ENCODE measurements at regions of chr12 and their contacts with region 1.

Region 1: GRCh38 chr12:53267999-53268647 is at the start of gene ESPL1:
- DNase-seq: peak; percentile 89
- ATAC-seq: peak; percentile 88
- H3K4me3 Mint-ChIP-seq: peak within 1 kb of the TSS; percentile 100
- H3K27ac Mint-ChIP-seq: peak within 1 kb of the TSS; percentile 86
- H3K4me1 Mint-ChIP-seq: peaks cover 29% of the 10 kb centered on the region
- H3K27me3 Mint-ChIP-seq: no peaks in the 10 kb centered on the region; the same call in 1 of the 2 replicates
- CTCF ChIP-seq: peak; percentile 26; the same call in 1 of the 2 replicates
- total RNA-seq, gene ESPL1: 41.5 to 61.4 TPM (median 48.5 TPM) in 3 replicates

Region 2: GRCh38 chr12:53174881-53175491 is 93.1 kb before region 1 on chr12:
- CTCF ChIA-PET with region 1: interaction called, 15 read pairs
- POLR2A ChIA-PET with region 1: no interaction called
- DNase-seq: peak; percentile 63
- ATAC-seq: peak; percentile 97
- H3K4me3 Mint-ChIP-seq: no peak overlapping the region
- H3K27ac Mint-ChIP-seq: no peak overlapping the region
- H3K4me1 Mint-ChIP-seq: peaks cover 23% of the 10 kb centered on the region
- H3K27me3 Mint-ChIP-seq: peaks cover 100% of the 10 kb centered on the region
- CTCF ChIP-seq: no peak

Region 3: DNA sequence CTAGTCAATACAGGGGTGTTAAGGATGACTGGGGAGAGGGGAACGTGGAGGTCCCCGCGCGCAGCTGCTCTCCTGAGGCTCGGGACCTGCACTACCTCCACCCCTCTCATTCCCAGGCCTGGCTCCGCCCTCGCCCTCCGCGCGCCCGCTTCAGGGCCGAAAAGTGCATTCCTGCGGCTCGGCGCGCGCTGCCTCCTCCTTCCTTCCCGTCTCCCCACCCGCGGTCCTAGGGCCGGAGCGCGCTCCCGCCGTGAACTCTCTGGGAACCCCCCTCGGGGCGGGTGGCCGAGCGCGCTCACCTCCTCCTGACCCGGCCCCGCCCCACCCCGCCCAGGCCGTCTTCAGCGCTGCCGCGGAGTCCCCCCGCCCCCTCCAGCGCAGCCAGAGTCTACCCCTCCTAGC is 47.3 kb before region 1 on chr12:
- CTCF ChIA-PET with region 1: interaction called, 333 read pairs
- POLR2A ChIA-PET with region 1: interaction called, 5 read pairs
- DNase-seq: peak; percentile 94
- ATAC-seq: peak; percentile 38
- H3K4me3 Mint-ChIP-seq: peak overlapping the region; percentile 90
- H3K27ac Mint-ChIP-seq: peak overlapping the region; percentile 98
- H3K4me1 Mint-ChIP-seq: peaks cover 75% of the 10 kb centered on the region
- H3K27me3 Mint-ChIP-seq: peaks cover 7% of the 10 kb centered on the region; the same call in 1 of the 2 replicates
- CTCF ChIP-seq: no peak

Region 4: DNA sequence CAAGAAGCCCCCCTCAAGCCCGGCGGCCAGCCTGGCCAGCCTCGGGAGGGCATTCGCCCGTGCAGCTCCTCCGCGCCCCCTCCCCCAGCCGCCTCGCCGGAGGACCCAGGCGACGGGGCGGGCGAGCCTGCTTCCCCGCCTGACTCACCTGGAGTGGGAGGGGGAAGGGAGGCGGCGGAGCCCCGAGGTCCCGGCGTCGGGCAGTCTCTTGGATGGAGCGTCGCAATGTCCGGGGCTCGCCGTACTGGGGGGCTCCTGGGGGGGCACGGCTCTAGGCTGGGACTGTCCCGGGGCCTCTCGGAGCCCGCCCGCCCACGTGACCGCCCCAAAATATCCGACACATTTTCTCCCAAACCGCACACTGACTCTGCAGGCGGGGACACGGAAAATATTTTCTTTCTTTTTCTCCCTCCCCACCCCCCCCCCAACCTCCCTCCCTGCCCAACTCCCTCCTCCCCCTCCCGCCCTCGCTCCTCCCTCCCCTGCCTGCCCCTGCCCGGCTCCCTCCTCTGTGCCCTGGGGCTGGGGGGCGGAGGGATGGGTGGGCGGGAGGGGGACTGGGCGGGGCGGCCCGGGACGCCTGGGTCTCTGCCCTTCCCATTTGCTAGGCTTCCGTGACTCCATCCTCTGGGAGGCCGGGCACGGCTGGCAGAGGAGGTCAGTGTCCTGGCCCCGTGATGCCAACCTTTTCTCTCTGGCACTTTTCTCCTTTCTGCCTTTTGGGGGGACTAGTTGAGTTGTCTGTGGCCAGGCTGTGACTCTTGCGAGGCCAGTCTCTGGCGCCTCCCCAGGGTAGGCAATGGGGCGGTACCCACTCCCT is 36.1 kb before region 1 on chr12 and contains the start of gene RARG:
- CTCF ChIA-PET with region 1: interaction called, 27 read pairs
- POLR2A ChIA-PET with region 1: no interaction called
- DNase-seq: peak; percentile 57
- ATAC-seq: peak; percentile 43
- H3K4me3 Mint-ChIP-seq: peak within 1 kb of the TSS; percentile 82
- H3K27ac Mint-ChIP-seq: peak within 1 kb of the TSS; percentile 88
- H3K4me1 Mint-ChIP-seq: peaks cover 77% of the 10 kb centered on the region
- H3K27me3 Mint-ChIP-seq: peaks cover 5% of the 10 kb centered on the region; the same call in 1 of the 2 replicates
- CTCF ChIP-seq: no peak
- total RNA-seq, gene RARG: 68.1 to 77.2 TPM (median 69.7 TPM) in 3 replicates

Region 5: DNA sequence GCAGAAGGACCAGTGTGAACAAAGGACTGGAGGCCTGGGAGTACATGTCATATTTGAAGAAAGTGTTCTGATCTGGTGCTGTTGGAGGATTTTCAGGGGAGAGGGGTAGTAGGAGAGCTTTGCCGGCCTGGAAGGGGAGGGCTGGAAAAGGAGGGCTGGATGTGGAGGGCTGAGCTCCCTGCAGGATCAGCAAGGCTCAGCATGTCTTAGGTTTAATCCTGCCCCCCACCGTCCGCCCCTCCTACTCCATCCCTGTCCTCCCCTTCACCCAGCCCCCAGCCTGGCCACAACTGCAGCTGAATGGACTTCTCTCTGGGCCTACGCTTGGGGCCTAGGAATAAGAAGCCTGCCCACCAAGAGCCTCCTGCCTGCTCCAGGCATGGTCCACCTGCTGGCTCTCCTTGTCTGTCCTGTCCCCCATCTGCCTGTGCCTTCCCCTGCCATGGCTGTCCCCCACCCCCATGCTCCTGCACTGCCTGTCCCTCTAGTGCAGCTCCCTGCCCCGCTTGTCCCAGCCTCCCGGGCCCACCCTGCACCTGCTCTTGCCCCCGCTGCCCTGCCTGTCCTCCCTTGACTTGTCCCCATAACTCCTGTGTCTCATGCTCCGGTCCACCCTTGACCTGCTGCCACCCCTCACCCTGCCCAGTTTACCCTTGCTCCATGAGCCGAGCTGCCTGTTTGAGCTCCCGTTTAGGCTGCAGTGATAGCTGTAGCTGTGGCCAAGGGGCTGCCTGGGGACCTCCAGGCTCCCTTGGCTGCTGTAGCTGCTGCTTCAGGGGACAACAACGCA is 26.3 kb before region 1 on chr12:
- CTCF ChIA-PET with region 1: interaction called, 48 read pairs
- POLR2A ChIA-PET with region 1: interaction called, 3 read pairs
- DNase-seq: peak; percentile 66
- ATAC-seq: peak; percentile 75
- H3K4me3 Mint-ChIP-seq: 0 out of 2 replicates have a peak overlapping the region, but pooled peaks have one; percentile 6
- H3K27ac Mint-ChIP-seq: peak overlapping the region; percentile 18; the same call in 1 of the 2 replicates
- H3K4me1 Mint-ChIP-seq: peaks cover 45% of the 10 kb centered on the region
- H3K27me3 Mint-ChIP-seq: peaks cover 2% of the 10 kb centered on the region; the same call in 1 of the 2 replicates
- CTCF ChIP-seq: no peak

Region 6: GRCh38 chr12:53251477-53252348 is 16.4 kb before region 1 on chr12:
- CTCF ChIA-PET with region 1: interaction called, 19 read pairs
- POLR2A ChIA-PET with region 1: interaction called, 4 read pairs
- DNase-seq: peak; percentile 86
- ATAC-seq: peak; percentile 87
- H3K4me3 Mint-ChIP-seq: peak overlapping the region; percentile 93
- H3K27ac Mint-ChIP-seq: peak overlapping the region; percentile 94
- H3K4me1 Mint-ChIP-seq: peaks cover 25% of the 10 kb centered on the region
- H3K27me3 Mint-ChIP-seq: no peaks in the 10 kb centered on the region
- CTCF ChIP-seq: no peak

Region 7: GRCh38 chr12:53295070-53295890 is 27.2 kb after region 1 on chr12 and contains the start of gene PFDN5:
- CTCF ChIA-PET with region 1: interaction called, 14 read pairs
- POLR2A ChIA-PET with region 1: interaction called, 12 read pairs
- DNase-seq: peak; percentile 85
- ATAC-seq: peak; percentile 85
- H3K4me3 Mint-ChIP-seq: peak within 1 kb of the TSS; percentile 99
- H3K27ac Mint-ChIP-seq: peak within 1 kb of the TSS; percentile 96
- H3K4me1 Mint-ChIP-seq: peaks cover 18% of the 10 kb centered on the region
- H3K27me3 Mint-ChIP-seq: no peaks in the 10 kb centered on the region
- CTCF ChIP-seq: no peak
- total RNA-seq, gene PFDN5: 263 to 286 TPM (median 270 TPM) in 3 replicates